Naive thymus-derived CD4-positive, alpha-beta T cell (primary cell): ENCODE measurements at regions of chr4 and their contacts with region 1.

Region 1: GRCh38 chr4:38675146-38676121 is 11.4 kb downstream of the KLF3 start:
- DNase-seq: peak; percentile 57 to 85 (median 81)
- ATAC-seq: peak; percentile 75
- H3K4me3 ChIP-seq: peak overlapping the region; percentile 25
- H3K4me3 Mint-ChIP-seq: peak overlapping the region; percentile 48 to 99 (median 81)
- H3K27ac ChIP-seq: peak overlapping the region; percentile 98
- H3K27ac Mint-ChIP-seq: peak overlapping the region in 8 of 9 donors; percentile 82 to 100 (median 94)
- H3K4me1 ChIP-seq: peaks cover 45 to 70% of the 10 kb centered on the region in 2 donors
- H3K4me1 Mint-ChIP-seq: peaks cover 61 to 97% (median 90%) of the 10 kb centered on the region in 7 donors
- H3K27me3 ChIP-seq: no peaks in the 10 kb centered on the region
- H3K27me3 Mint-ChIP-seq: peaks cover 0 to 3% (median 0%) of the 10 kb centered on the region in 5 donors

Region 2: DNA sequence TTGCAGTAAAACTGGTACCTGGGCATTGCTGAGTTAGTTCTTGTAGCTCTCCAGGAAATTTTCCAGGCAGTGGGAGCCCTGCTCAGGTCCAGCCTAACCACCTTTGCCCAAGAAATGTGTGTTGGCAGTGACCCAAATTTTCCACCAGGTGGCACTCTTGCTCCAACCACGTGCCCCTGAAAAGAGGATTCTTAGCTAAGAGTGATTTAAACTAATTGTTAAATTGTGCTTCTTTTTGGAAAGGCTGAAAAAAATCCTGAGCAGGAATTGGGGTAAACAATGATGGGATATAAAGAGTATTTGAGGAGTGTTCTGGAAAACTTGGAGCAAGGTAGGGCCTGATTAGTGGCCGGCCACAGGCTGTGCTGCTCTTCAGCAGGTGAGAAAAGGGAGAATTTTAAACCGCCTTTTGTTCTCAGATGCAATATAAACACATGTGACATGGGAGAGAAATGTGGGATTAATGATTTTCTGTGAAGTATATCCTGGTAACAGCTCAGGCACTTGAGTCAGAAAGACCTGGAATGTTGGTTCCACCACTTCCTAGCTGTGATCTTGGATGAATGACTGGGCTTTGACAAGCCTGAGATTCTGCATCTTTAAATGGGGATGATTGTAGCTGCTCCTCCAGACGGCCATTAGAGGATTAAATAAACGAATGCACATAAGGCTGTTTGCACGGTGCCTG is 495.6 kb before region 1 on chr4:
- CTCF ChIA-PET with region 1: interaction called, 61 read pairs
- POLR2A ChIA-PET with region 1: interaction called, 6 read pairs
- intact Hi-C with region 1: loop called (anchors 1 kb)
- DNase-seq: peak; percentile 47 to 79 (median 69)
- ATAC-seq: peak; percentile 71
- H3K4me3 ChIP-seq: no peak overlapping the region
- H3K4me3 Mint-ChIP-seq: no peak overlapping the region
- H3K27ac ChIP-seq: no peak overlapping the region
- H3K27ac Mint-ChIP-seq: peak overlapping the region in 6 of 9 donors; percentile 2 to 55 (median 22)
- H3K4me1 ChIP-seq: peaks cover 17 to 21% of the 10 kb centered on the region in 2 donors
- H3K4me1 Mint-ChIP-seq: peaks cover 25 to 53% (median 46%) of the 10 kb centered on the region in 7 donors
- H3K27me3 ChIP-seq: no peaks in the 10 kb centered on the region
- H3K27me3 Mint-ChIP-seq: peaks cover 0 to 28% (median 0%) of the 10 kb centered on the region in 5 donors

Region 3: DNA sequence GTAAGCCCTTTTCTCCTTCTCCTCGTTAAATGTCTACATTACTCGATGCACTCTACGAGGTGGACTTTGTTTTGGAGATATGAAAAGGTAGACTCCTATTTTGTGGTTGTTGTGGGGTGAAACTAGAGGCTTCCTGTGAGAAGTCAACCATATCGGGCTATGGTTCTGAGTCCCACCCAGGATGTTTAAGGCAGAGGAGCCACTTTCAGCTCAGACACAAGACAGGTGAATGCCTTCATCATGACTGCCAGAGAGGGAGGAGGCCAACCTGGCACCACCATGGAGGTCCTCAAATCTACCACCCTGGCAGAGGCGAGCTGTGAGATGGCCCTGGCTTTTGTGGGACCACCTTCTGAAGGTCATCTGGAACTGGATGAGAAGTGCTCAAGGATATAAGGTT is 165.9 kb before region 1 on chr4:
- CTCF ChIA-PET with region 1: interaction called, 10 read pairs
- POLR2A ChIA-PET with region 1: interaction called, 14 read pairs
- intact Hi-C with region 1: loop called in 1 of 2 experiments (anchors 2 kb)
- DNase-seq: peak in 8 of 9 donors; percentile 30 to 83 (median 76)
- ATAC-seq: peak; percentile 94
- H3K4me3 ChIP-seq: peak overlapping the region; percentile 61
- H3K4me3 Mint-ChIP-seq: peak overlapping the region; percentile 70 to 94 (median 89)
- H3K27ac ChIP-seq: peak overlapping the region; percentile 74
- H3K27ac Mint-ChIP-seq: peak overlapping the region; percentile 71 to 97 (median 89)
- H3K4me1 ChIP-seq: peaks cover 60 to 64% of the 10 kb centered on the region in 2 donors
- H3K4me1 Mint-ChIP-seq: peaks cover 40 to 94% (median 90%) of the 10 kb centered on the region in 7 donors
- H3K27me3 ChIP-seq: no peaks in the 10 kb centered on the region
- H3K27me3 Mint-ChIP-seq: peaks cover 0 to 51% (median 0%) of the 10 kb centered on the region in 5 donors

Region 4: DNA sequence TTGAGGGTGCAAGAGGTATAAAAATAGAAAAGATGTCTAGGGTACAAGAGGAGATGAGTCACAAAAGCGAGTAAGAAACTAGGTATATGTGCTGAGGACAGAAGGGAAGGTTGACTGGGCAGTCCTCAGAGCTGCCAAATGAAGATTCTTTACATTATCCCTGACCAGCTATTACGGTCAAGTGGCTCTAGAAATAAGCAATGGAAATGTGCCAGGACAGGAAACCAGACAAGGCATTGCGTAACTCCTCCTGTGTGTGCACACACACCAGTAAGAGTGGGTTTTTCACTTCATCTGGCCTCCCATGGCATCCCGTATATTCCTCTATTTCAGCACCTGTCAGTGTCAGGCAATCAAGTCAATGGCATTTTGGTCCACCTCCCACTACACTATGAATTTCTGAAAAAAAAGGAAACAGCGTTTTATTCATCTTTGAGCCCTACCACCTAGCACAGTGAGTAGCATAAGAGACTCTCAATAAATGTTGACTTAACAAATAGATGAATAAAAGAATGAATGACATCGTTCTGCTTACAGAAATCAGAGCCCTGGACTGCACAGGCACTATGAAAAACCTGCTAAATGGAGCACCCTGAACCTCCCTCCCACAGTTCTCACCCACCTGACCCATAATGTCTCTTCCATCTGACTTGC is 74.1 kb before region 1 on chr4:
- CTCF ChIA-PET with region 1: interaction called, 4 read pairs
- POLR2A ChIA-PET with region 1: no interaction called
- intact Hi-C with region 1: loop called in 1 of 2 experiments (anchors 1 kb)
- DNase-seq: no peak
- ATAC-seq: no peak
- H3K4me3 ChIP-seq: no peak overlapping the region
- H3K4me3 Mint-ChIP-seq: no peak overlapping the region
- H3K27ac ChIP-seq: no peak overlapping the region
- H3K27ac Mint-ChIP-seq: peak overlapping the region in 4 of 9 donors; percentile 18 to 27 (median 20)
- H3K4me1 ChIP-seq: peaks cover 5% of the 10 kb centered on the region in 2 donors
- H3K4me1 Mint-ChIP-seq: peaks cover 16 to 40% (median 24%) of the 10 kb centered on the region in 7 donors
- H3K27me3 ChIP-seq: no peaks in the 10 kb centered on the region
- H3K27me3 Mint-ChIP-seq: peaks cover 0 to 10% (median 0%) of the 10 kb centered on the region in 5 donors

Region 5: GRCh38 chr4:38663801-38664705 is 11.4 kb before region 1 on chr4 and contains the start of gene KLF3:
- CTCF ChIA-PET with region 1: interaction called, 13 read pairs
- POLR2A ChIA-PET with region 1: interaction called, 19 read pairs
- intact Hi-C with region 1: loop called in 1 of 2 experiments (anchors 1 kb)
- DNase-seq: peak in 7 of 9 donors; percentile 91 to 95 (median 93)
- ATAC-seq: peak; percentile 86
- H3K4me3 ChIP-seq: peak within 1 kb of the TSS; percentile 64
- H3K4me3 Mint-ChIP-seq: peak within 1 kb of the TSS; percentile 85 to 100 (median 99)
- H3K27ac ChIP-seq: peak within 1 kb of the TSS; percentile 98
- H3K27ac Mint-ChIP-seq: peak within 1 kb of the TSS; percentile 85 to 100 (median 95)
- H3K4me1 ChIP-seq: peaks cover 33 to 50% of the 10 kb centered on the region in 2 donors
- H3K4me1 Mint-ChIP-seq: peaks cover 40 to 57% (median 53%) of the 10 kb centered on the region in 7 donors
- H3K27me3 ChIP-seq: no peaks in the 10 kb centered on the region
- H3K27me3 Mint-ChIP-seq: peaks cover 0 to 63% (median 0%) of the 10 kb centered on the region in 5 donors
- total RNA-seq, gene KLF3: 21.0 to 142 (median 132) TPM

Region 6: GRCh38 chr4:38925492-38926413 is 250.3 kb after region 1 on chr4:
- CTCF ChIA-PET with region 1: no interaction called
- POLR2A ChIA-PET with region 1: no interaction called
- intact Hi-C with region 1: no loop called
- DNase-seq: no peak
- ATAC-seq: no peak
- H3K4me3 ChIP-seq: no peak overlapping the region
- H3K4me3 Mint-ChIP-seq: no peak overlapping the region
- H3K27ac ChIP-seq: no peak overlapping the region
- H3K27ac Mint-ChIP-seq: peak overlapping the region in 1 of 9 donors; percentile 67
- H3K4me1 ChIP-seq: no peaks in the 10 kb centered on the region
- H3K4me1 Mint-ChIP-seq: peaks cover 0 to 5% (median 3%) of the 10 kb centered on the region in 7 donors
- H3K27me3 ChIP-seq: no peaks in the 10 kb centered on the region
- H3K27me3 Mint-ChIP-seq: peaks cover 0 to 4% (median 0%) of the 10 kb centered on the region in 5 donors

Region 7: DNA sequence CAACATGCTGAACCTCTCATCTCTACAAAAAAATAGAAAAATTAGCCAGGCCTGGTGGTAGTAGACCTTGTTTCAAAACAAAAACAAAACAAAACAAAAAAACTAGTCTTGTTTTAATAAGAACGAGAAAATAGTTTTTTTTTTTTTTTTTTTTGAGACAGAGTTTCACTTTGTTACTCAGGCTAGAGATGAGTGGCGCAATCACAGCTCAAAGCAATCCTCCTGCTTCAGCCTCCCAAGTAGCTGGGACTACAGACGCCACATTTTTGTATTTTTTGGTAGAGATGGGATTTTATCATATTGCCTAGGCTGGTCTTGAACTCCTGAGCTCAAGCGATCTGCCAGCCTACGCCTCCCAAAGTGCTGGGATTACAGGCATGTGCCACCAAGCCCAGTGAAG is 899.5 kb after region 1 on chr4:
- CTCF ChIA-PET with region 1: no interaction called
- POLR2A ChIA-PET with region 1: no interaction called
- intact Hi-C with region 1: no loop called
- DNase-seq: no peak
- ATAC-seq: no peak
- H3K4me3 ChIP-seq: no peak overlapping the region
- H3K4me3 Mint-ChIP-seq: no peak overlapping the region
- H3K27ac ChIP-seq: no peak overlapping the region
- H3K27ac Mint-ChIP-seq: no peak overlapping the region
- H3K4me1 ChIP-seq: no peaks in the 10 kb centered on the region
- H3K4me1 Mint-ChIP-seq: peaks cover 0 to 2% (median 0%) of the 10 kb centered on the region in 7 donors
- H3K27me3 ChIP-seq: no peaks in the 10 kb centered on the region
- H3K27me3 Mint-ChIP-seq: no peaks in the 10 kb centered on the region